ENCODE measurements at regions of chr3 and their contacts with region 1.

Region 1: DNA sequence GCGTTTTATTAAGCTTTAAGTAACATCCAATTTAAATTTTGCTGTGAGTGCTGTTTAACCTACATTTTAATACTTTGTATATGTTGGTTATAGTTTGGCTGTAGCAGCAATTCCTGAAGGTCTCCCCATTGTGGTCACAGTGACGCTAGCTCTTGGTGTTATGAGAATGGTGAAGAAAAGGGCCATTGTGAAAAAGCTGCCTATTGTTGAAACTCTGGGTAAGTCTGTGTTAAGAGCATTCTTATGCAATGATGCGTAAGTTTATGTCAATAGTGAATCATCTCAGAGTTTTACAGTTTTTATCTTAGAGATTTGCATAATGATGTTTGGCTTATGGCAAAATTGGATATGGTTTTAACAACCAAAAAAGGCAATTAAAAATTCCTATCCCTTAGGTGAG is 62.7 kb downstream of the ASTE1 start:
- DNase-seq: peak; percentile 98
- ATAC-seq: peak; percentile 84
- H3K4me3 ChIP-seq: no peak overlapping the region
- H3K27ac ChIP-seq: peak overlapping the region; percentile 64; the same call in 1 of the 2 replicates
- H3K4me1 ChIP-seq: peaks cover 5% of the 10 kb centered on the region
- H3K27me3 ChIP-seq: no peaks in the 10 kb centered on the region
- CTCF ChIP-seq: no peak
- POLR2A ChIP-seq: no peak
- RAD21 ChIP-seq: no peak

Region 2: DNA sequence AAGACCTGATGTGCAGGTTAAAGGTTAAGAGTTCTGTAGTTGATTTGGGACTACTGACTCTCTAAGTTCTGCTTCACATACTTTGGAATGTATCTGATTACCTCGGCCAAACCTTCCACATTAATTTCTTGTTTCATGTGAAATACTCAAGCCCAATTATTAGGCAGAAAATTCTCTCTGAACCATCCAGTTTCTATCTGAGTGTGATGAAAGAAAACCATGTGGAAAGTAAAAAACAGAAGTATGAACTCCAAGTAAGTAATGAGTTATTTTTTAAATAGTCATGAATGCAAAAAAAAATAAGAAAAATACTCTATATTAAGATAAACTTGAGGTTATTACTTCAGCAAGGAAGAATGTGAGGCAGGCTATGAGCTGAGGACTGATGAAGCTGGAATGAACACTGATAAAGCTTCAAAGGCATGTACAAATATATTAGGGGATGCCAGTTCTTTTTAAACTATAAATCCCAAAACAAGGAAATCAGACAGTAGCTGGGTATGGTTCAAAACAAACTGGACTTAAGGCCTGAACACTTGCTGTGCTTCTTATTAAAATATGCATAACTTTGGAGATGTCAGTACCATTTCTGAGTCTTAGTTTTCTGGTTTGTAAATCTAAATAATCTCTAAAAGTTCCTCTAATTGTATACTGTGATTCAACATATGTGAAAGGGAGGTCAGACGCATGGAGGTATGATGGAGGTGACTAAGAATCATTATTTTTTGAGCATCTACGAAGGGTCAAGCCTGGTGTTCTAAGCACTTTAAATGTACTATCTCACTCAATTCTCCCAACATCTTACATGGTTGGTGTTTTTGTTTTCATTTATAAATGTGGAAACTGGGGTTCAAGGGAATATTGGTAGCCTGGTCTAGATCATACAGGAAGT is 387.3 kb before region 1 on chr3:
- CTCF ChIA-PET with region 1: no interaction called
- POLR2A ChIA-PET with region 1: no interaction called
- dilution Hi-C with region 1: no loop called
- in situ Hi-C with region 1: no loop called
- intact Hi-C with region 1: loop called (anchors 10 kb)
- DNase-seq: peak; percentile 82
- ATAC-seq: peak; percentile 93
- H3K4me3 ChIP-seq: no peak overlapping the region
- H3K27ac ChIP-seq: peak overlapping the region; percentile 66; the same call in 1 of the 2 replicates
- H3K4me1 ChIP-seq: 0 out of 2 replicates have a peak, but pooled peaks cover 2% of the 10 kb centered on the region
- H3K27me3 ChIP-seq: no peaks in the 10 kb centered on the region; the same call in 1 of the 2 replicates
- CTCF ChIP-seq: no peak
- POLR2A ChIP-seq: no peak
- RAD21 ChIP-seq: no peak

Region 3: GRCh38 chr3:130688015-130688688 is 275.7 kb before region 1 on chr3:
- CTCF ChIA-PET with region 1: no interaction called
- POLR2A ChIA-PET with region 1: no interaction called
- dilution Hi-C with region 1: no loop called
- in situ Hi-C with region 1: no loop called
- intact Hi-C with region 1: no loop called
- DNase-seq: no peak
- ATAC-seq: no peak
- H3K4me3 ChIP-seq: no peak overlapping the region
- H3K27ac ChIP-seq: no peak overlapping the region
- H3K4me1 ChIP-seq: no peaks in the 10 kb centered on the region
- H3K27me3 ChIP-seq: no peaks in the 10 kb centered on the region
- CTCF ChIP-seq: no peak
- POLR2A ChIP-seq: no peak
- RAD21 ChIP-seq: no peak

Region 4: GRCh38 chr3:130773366-130773765 is 190.5 kb before region 1 on chr3:
- CTCF ChIA-PET with region 1: no interaction called
- POLR2A ChIA-PET with region 1: no interaction called
- dilution Hi-C with region 1: no loop called
- in situ Hi-C with region 1: no loop called
- intact Hi-C with region 1: no loop called
- DNase-seq: no peak
- ATAC-seq: no peak
- H3K4me3 ChIP-seq: no peak overlapping the region
- H3K27ac ChIP-seq: no peak overlapping the region
- H3K4me1 ChIP-seq: no peaks in the 10 kb centered on the region
- H3K27me3 ChIP-seq: no peaks in the 10 kb centered on the region
- CTCF ChIP-seq: no peak
- POLR2A ChIP-seq: no peak
- RAD21 ChIP-seq: no peak

Region 5: DNA sequence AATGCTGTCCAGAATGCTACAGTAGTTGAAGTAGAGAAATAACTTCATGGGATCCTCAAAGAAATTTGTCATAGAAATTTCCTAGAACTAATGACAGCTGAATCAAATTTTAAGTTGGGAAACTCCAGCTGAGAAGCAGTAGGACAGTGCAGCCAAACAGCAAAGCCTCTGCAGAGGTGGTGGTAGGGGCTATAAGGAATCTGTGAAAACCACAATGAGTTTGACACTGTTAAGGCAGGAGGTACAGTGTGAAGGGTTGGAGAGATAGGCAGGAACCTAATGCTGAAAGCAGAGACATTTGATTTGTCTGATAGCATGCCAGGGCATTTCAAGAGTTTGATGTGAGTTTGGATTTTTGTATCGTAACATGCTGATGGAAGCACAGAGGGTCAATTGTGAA is 40.7 kb after region 1 on chr3:
- CTCF ChIA-PET with region 1: no interaction called
- POLR2A ChIA-PET with region 1: no interaction called
- dilution Hi-C with region 1: no loop called
- in situ Hi-C with region 1: no loop called
- intact Hi-C with region 1: no loop called
- DNase-seq: no peak
- ATAC-seq: no peak
- H3K4me3 ChIP-seq: no peak overlapping the region
- H3K27ac ChIP-seq: no peak overlapping the region
- H3K4me1 ChIP-seq: peaks cover 4% of the 10 kb centered on the region; the same call in 1 of the 2 replicates
- H3K27me3 ChIP-seq: no peaks in the 10 kb centered on the region
- CTCF ChIP-seq: no peak
- POLR2A ChIP-seq: no peak
- RAD21 ChIP-seq: no peak

Region 6: GRCh38 chr3:131260525-131260924 is 296.6 kb after region 1 on chr3:
- CTCF ChIA-PET with region 1: no interaction called
- POLR2A ChIA-PET with region 1: no interaction called
- dilution Hi-C with region 1: no loop called
- in situ Hi-C with region 1: no loop called
- intact Hi-C with region 1: no loop called
- DNase-seq: no peak
- ATAC-seq: no peak
- H3K4me3 ChIP-seq: no peak overlapping the region
- H3K27ac ChIP-seq: no peak overlapping the region
- H3K4me1 ChIP-seq: no peaks in the 10 kb centered on the region
- H3K27me3 ChIP-seq: no peaks in the 10 kb centered on the region
- CTCF ChIP-seq: no peak
- POLR2A ChIP-seq: no peak
- RAD21 ChIP-seq: no peak